Sigmoid colon (tissue), 7 donors: ENCODE measurements at regions of chr1 and their contacts with region 1.

Region 1: DNA sequence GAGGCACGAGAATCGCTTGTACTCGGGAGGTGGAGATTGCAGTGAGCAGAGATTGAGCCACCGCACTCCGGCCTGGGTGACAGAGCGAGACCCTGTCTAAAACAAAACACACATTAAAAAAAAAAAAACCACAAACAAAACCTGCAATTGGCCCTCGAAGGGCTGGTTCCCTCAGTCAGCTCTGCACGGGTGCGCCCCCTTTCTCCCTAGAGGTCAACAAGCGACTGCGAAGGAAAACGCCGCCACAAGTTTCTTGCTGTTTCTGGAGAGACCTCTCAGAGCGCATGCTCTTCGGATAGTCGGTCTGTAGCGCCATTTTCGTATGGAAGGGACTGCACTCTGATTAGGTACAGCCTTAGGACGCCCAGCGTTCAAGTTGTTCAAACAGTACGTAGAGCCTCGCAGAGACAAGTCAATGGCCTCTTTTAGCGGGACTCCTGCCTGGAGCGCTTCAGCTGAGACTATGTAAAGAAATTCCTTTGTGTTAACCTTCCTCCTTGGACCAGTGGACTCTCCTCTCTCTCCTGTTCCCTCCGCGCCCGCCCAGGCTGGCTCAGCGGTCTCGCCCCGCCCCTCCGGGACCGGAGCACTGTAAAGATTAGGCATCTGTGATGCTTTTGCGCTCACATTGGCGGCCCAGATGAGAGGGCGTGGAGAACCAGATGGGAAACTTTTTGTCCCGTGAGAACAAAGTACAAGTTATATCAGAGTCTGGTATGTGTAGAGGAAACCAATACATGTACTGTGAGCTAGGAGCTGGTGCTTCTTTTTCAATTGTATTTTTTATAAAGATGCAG is 1.0 kb upstream of the CDC14A start:
- DNase-seq: peak; percentile 90
- H3K4me3 ChIP-seq: peak overlapping the region; percentile 70 to 98 (median 93)
- H3K27ac ChIP-seq: peak overlapping the region; percentile 90 to 96 (median 92)
- H3K4me1 ChIP-seq: peaks cover 0 to 27% (median 23%) of the 10 kb centered on the region in 4 donors
- H3K27me3 ChIP-seq: no peaks in the 10 kb centered on the region
- CTCF ChIP-seq: peak in 1 of 4 experiments; percentile 17
- EP300 ChIP-seq: no peak
- POLR2A ChIP-seq: peak; percentile 15 to 40

Region 2: DNA sequence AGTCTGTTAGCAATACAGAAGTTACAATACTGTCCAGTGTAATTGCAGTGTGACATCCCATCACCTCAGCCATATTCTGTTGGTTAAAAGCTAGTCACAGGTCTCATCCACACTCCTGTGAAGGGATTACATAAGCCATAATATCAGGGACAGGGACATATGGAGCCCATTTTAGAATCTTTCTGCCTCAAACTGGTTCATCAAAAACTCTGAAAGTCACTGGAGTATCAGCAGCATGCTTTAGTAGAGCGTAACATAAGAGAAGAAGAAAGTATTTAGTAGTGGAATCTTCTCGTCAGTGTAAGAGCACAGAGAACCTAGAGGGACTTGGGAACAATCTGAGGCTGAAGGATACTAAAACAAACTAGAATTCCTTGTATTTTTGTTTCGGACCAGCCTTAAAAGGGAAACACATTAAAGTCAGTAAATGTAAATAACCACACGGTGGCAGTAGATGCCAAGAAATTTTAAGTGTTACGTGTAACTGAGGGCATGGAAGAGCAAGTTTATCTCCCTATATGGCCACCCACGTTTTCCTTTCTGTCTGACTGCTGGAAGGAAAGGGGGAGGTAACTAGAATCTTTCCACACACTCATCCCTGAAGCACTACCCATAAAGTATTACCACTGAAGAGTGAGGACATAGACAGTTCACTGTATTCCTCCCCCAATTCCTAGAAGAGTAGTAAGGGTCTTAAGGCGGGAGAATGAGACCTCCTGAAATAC is 542.7 kb before region 1 on chr1:
- intact Hi-C with region 1: loop called (anchors 2 kb)
- DNase-seq: peak; percentile 69
- H3K4me3 ChIP-seq: peak overlapping the region in 3 of 4 donors; percentile 8 to 18 (median 16)
- H3K27ac ChIP-seq: peak overlapping the region; percentile 69 to 85 (median 82)
- H3K4me1 ChIP-seq: peaks cover 0 to 13% (median 6%) of the 10 kb centered on the region in 4 donors
- H3K27me3 ChIP-seq: no peaks in the 10 kb centered on the region
- CTCF ChIP-seq: peak; percentile 32 to 76 (median 61)
- EP300 ChIP-seq: peak in 1 of 4 donors; percentile 65
- POLR2A ChIP-seq: peak in 1 of 2 donors; percentile 30

Region 3: DNA sequence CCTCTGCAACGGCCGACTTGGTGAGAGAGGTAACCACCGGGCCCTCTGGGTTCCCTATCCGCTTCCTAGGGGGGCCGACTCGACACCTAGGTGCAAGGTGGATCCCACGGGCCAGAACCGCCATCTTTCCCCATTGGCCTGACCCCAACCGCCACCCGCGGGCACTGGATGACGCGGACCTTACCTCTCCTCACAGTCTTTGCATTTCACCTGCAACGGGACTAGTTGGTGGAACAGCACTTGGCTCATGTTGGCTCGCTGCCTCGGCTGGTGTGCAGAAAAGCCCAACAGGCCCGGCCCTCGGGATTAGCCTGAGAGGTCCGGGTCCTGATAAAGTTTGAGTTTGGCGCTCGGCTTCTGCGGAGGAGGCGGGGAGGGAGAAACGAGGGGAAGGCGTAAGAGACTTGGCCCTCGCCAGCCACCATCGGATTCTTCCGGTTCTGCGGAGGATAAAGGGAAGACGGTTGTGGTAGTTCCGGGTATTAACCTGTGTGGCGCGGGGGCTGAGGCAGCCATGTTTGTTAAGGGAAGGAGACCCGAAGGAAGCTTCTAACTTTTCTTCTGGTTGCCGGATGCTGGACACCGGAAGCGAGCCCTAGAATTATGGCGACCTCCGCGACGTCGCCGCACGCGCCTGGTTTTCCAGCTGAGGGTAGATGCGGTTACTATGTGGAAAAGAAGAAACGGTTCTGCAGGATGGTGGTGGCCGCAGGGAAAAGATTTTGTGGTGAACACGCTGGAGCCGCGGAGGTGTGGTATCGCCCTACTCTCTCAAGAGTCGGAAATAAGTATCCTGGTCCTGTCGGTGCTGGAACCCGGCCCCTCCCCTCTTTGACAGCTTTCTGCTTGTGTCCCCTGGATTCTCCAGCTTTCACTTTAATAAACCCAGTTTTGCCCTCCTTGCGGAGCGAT is 218.5 kb before region 1 on chr1 and contains the starts of genes SASS6 and TRMT13:
- intact Hi-C with region 1: loop called (anchors 5 kb)
- DNase-seq: peak; percentile 98
- H3K4me3 ChIP-seq: peak within 1 kb of the TSS; percentile 58 to 88 (median 78)
- H3K27ac ChIP-seq: peak within 1 kb of the TSS; percentile 69 to 83 (median 76)
- H3K4me1 ChIP-seq: peaks cover 0 to 27% (median 21%) of the 10 kb centered on the region in 4 donors
- H3K27me3 ChIP-seq: no peaks in the 10 kb centered on the region
- CTCF ChIP-seq: no peak
- EP300 ChIP-seq: peak in 1 of 4 donors; percentile 40
- POLR2A ChIP-seq: no peak
- total RNA-seq, gene SASS6: 2.7 to 7.1 (median 4.9) TPM
- total RNA-seq, gene TRMT13: 17.4 to 26.4 (median 24.8) TPM

Region 4: GRCh38 chr1:100265931-100266740 is 85.2 kb before region 1 on chr1 and contains the start of gene RTCA:
- intact Hi-C with region 1: loop called (anchors 5 kb)
- DNase-seq: peak; percentile 98
- H3K4me3 ChIP-seq: peak within 1 kb of the TSS; percentile 70 to 83 (median 75)
- H3K27ac ChIP-seq: peak within 1 kb of the TSS; percentile 82 to 87 (median 84)
- H3K4me1 ChIP-seq: peaks cover 0 to 44% (median 23%) of the 10 kb centered on the region in 4 donors
- H3K27me3 ChIP-seq: no peaks in the 10 kb centered on the region
- CTCF ChIP-seq: no peak
- EP300 ChIP-seq: no peak
- POLR2A ChIP-seq: peak; percentile 38 to 44
- total RNA-seq, gene RTCA: 16.3 to 24.3 (median 19.8) TPM

Region 5: GRCh38 chr1:100459358-100460114 is 108.2 kb after region 1 on chr1:
- intact Hi-C with region 1: loop called (anchors 5 kb)
- DNase-seq: peak; percentile 86
- H3K4me3 ChIP-seq: no peak overlapping the region
- H3K27ac ChIP-seq: peak overlapping the region; percentile 18 to 73 (median 60)
- H3K4me1 ChIP-seq: peaks cover 0 to 13% (median 8%) of the 10 kb centered on the region in 4 donors
- H3K27me3 ChIP-seq: no peaks in the 10 kb centered on the region
- CTCF ChIP-seq: peak; percentile 84 to 87 (median 86)
- EP300 ChIP-seq: no peak
- POLR2A ChIP-seq: no peak